Posterior cingulate gyrus (tissue), 11 donors: ENCODE measurements at regions of chr2 and their contacts with region 1.

Region 1: DNA sequence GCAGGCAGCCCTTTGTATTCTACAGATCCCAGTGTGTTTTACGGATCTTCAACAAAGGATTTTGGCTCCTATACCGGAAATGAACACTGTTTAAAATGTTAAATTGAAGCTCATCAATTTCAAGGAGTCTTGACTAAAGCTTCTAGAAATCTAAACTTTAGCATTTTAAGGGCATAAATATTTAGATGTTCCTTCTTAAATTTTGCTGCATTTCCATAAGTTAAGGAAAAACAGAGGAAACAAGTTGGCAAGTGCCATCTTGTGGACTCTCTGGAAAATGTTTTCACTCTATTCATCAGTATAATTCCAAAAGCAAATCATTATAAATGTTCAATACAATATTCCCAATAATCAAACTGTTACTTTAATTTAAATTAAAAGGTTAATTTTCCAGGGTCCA is 19.6 kb downstream of the CHN1 start:
- DNase-seq: no peak

Region 2: DNA sequence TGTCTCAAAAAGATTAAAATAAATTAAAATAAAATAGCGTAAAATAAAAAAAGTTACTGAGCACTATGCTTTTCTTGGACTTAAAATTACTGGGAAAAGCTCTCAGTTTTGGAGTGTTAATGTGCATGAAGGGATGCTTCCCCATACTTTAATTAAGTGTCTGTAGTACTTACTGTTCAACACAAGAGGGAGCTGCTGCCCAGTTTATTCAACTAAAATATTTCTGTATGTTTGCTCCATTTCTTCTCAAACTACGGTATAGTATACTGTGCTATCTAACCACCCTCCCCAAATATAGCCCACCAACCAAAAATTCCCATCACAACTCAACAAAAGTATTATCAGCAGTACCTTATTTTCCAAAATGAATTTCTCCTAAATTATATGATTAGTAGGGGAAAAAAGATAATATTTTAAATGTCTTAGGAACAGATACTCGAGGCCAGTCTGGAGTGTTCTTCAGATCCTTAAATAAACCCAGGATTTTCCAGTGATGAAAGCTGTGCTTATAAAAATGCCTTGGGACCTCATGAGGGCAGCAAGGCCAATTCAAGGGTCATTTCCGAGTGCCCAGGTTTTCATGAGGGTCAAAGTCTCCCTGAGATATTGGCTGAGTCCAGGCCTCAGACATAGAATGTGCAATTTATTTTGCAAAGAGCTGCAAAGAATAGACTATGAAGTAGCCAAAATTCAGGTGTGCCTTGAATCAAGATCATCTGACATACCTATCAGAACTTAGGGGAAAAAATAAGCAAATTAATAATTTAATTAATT is 285.4 kb before region 1 on chr2:
- intact Hi-C with region 1: loop called (anchors 5 kb)
- DNase-seq: no peak

Region 3: GRCh38 chr2:175154661-175155082 is 169.0 kb after region 1 on chr2:
- intact Hi-C with region 1: no loop called
- DNase-seq: no peak